Activated T-helper 1 cell treated with anti-CD3 and anti-CD28 coated beads, Interleukin-12 subunit alpha, Interleukin-12 subunit beta, Interleukin-2, Interleukin-4 antibody, amounts not matched to agents 30 ng/mL and 10 ng/mL and 1 ng/mL, durations not matched to agents 14 hours and 24 hours and 36 hours (primary cell): ENCODE measurements at regions of chr11 and their contacts with region 1.

Region 1: GRCh38 chr11:59283825-59284772 is 71.4 kb upstream of the MPEG1 start:
- DNase-seq: peak; percentile 14
- H3K4me3 Mint-ChIP-seq: peak overlapping the region; percentile 70
- H3K27ac Mint-ChIP-seq: no peak overlapping the region
- H3K4me1 Mint-ChIP-seq: peaks cover 16% of the 10 kb centered on the region
- H3K27me3 Mint-ChIP-seq: peaks cover 8% of the 10 kb centered on the region

Region 2: GRCh38 chr11:59053387-59053786 is 230.7 kb before region 1 on chr11:
- intact Hi-C with region 1: loop called (anchors 5 kb)
- DNase-seq: peak; percentile 58
- H3K4me3 Mint-ChIP-seq: no peak overlapping the region
- H3K27ac Mint-ChIP-seq: no peak overlapping the region
- H3K4me1 Mint-ChIP-seq: peaks cover 8% of the 10 kb centered on the region
- H3K27me3 Mint-ChIP-seq: peaks cover 31% of the 10 kb centered on the region

Region 3: GRCh38 chr11:59097113-59097708 is 186.9 kb before region 1 on chr11:
- intact Hi-C with region 1: loop called (anchors 1 kb)
- DNase-seq: peak; percentile 52
- H3K4me3 Mint-ChIP-seq: no peak overlapping the region
- H3K27ac Mint-ChIP-seq: no peak overlapping the region
- H3K4me1 Mint-ChIP-seq: peaks cover 18% of the 10 kb centered on the region
- H3K27me3 Mint-ChIP-seq: peaks cover 29% of the 10 kb centered on the region

Region 4: GRCh38 chr11:59207988-59208451 is 76.1 kb before region 1 on chr11:
- intact Hi-C with region 1: loop called (anchors 1 kb)
- DNase-seq: peak; percentile 4
- H3K4me3 Mint-ChIP-seq: peak overlapping the region; percentile 51
- H3K27ac Mint-ChIP-seq: peak overlapping the region; percentile 83
- H3K4me1 Mint-ChIP-seq: peaks cover 30% of the 10 kb centered on the region
- H3K27me3 Mint-ChIP-seq: peaks cover 52% of the 10 kb centered on the region

Region 5: DNA sequence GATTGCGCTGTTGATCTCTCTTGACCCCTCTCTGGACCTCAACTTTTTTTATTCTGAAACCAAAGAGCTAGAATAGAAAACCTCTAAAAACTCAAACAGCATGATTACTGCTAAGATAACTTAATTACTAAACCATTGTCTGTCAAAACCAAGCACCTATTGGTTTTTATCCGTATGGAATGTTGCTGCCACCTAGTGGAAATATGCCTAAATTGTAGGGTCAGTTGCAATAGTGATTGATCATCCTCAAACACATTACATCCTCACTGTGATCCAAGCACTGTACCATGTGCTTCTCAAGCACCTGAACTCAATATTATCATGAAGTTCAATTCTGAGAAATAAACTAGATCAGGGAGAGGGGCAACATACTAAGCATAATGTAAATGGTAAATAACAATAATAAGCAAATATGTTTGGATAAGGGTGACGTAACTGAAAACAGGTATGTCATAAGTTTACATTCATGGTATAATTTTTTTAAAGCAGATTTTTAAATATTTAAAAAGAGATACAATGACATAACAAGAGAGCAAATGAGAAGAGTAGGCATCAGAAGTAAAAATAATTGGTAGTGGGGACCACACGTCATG is 145.9 kb after region 1 on chr11:
- intact Hi-C with region 1: loop called (anchors 1 kb)
- DNase-seq: peak; percentile 24
- H3K4me3 Mint-ChIP-seq: no peak overlapping the region
- H3K27ac Mint-ChIP-seq: no peak overlapping the region
- H3K4me1 Mint-ChIP-seq: no peaks in the 10 kb centered on the region
- H3K27me3 Mint-ChIP-seq: peaks cover 6% of the 10 kb centered on the region